ENCODE measurements at regions of chr11 and their contacts with region 1.

Region 1: GRCh38 chr11:120929664-120930154 is 94.2 kb upstream of the TBCEL start:
- DNase-seq: peak; percentile 64
- H3K4me3 Mint-ChIP-seq: no peak overlapping the region
- H3K27ac Mint-ChIP-seq: no peak overlapping the region
- H3K4me1 Mint-ChIP-seq: no peaks in the 10 kb centered on the region
- H3K27me3 Mint-ChIP-seq: peaks cover 2% of the 10 kb centered on the region

Region 2: DNA sequence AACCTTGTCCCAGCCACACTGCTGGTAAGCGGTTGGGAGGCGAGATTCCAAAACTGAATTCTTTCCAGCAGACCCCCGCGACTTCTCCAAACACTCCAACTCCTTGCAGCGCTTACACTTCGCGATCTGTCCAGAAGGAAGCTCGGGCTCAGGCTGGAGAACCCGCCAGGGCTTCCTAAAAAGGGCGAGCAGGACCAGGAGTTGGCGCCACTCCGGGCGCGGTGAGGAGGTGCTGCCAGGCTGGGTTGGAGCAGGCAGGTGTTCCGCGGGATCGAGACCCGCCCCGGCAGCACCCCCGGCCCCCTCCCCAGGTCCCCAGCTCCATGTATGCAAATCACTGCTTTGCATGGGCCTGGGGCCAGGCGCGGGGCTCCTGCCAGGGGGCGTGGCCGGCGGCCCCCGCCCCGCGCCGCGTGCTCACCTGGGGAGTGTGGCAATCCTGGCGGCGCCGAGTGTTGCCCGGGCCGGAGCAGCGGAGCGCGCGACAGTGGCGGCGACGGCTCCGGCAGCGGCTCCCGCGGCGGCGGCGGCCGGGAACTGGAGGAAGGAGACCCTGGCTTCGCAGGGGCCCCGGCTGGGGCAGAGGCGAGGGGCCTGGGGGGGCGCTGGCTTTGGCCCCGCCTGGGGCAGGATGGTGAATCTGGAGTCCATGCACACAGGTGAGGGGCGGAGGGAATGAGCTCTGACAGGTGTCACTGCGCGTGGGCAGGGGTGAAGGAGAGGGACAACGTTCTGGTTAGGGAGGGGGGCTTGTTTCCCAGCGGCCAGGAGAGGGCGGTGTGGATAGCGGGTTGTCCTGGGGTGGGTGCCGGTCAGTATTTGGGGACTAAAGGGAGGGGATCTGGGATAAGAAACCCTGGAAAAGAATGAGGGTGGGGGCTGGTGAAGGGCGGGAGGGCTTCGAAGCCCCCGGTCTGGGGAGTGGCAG is 689.7 kb before region 1 on chr11 and contains the start of gene POU2F3:
- CTCF ChIA-PET with region 1: no interaction called
- intact Hi-C with region 1: no loop called
- DNase-seq: peak; percentile 30
- H3K4me3 Mint-ChIP-seq: no peak within 1 kb of the TSS
- H3K27ac Mint-ChIP-seq: no peak within 1 kb of the TSS
- H3K4me1 Mint-ChIP-seq: peaks cover 10% of the 10 kb centered on the region
- H3K27me3 Mint-ChIP-seq: peaks cover 64% of the 10 kb centered on the region
- total RNA-seq, gene POU2F3: not detected

Region 3: GRCh38 chr11:120835601-120836228 is 94.0 kb before region 1 on chr11:
- CTCF ChIA-PET with region 1: interaction called, 3 read pairs
- intact Hi-C with region 1: loop called (anchors 1 kb)
- DNase-seq: peak; percentile 71
- H3K4me3 Mint-ChIP-seq: no peak overlapping the region
- H3K27ac Mint-ChIP-seq: no peak overlapping the region
- H3K4me1 Mint-ChIP-seq: peaks cover 16% of the 10 kb centered on the region
- H3K27me3 Mint-ChIP-seq: peaks cover 16% of the 10 kb centered on the region

Region 4: GRCh38 chr11:120854988-120855387 is 74.7 kb before region 1 on chr11:
- CTCF ChIA-PET with region 1: no interaction called
- intact Hi-C with region 1: no loop called
- DNase-seq: no peak
- H3K4me3 Mint-ChIP-seq: no peak overlapping the region
- H3K27ac Mint-ChIP-seq: no peak overlapping the region
- H3K4me1 Mint-ChIP-seq: no peaks in the 10 kb centered on the region
- H3K27me3 Mint-ChIP-seq: peaks cover 3% of the 10 kb centered on the region

Region 5: DNA sequence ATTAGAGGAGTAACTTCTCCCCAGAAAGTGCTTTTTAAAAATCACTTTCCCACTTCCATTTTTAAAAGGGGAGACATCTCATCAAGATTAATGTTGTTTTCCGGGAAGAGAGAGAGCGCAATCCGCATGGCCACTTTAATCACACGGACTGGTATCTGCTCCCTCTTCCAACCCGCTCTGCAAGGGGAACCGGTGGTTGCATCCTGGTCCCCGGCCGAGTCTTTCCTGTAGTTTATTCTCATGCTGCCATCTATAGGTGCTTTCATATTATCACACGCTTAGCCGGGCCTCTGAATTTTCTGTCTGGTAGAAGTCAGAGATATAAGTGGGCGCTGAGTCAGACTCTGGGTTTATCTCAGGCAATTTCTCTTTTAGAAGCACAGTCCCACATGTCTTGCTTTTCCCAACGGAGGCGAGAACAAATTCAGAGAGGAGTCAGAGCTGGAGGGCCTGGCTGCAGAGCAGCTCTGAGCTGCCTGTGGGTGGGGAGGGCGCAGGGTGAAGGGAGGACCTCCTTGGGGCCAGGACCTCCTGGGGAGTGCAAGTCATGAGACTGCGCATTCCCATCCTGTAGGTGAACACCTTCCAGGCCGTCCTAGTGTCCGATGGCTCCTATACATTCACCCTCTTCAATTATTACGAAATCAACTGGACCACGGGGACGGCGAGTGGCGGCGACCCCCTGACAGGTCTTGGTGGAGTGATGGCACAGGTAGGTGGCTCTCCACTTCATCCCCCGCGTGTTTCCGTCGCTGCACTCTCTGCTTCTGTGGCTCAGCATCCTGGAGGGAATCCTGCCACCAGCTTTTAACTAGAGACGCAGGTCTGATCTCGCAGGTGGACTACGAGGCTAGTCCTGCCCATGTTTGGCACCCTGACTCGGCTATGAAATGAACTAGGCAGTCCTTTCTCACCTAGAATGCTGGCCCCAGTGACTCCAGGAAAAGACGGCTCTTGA is 183.1 kb after region 1 on chr11:
- CTCF ChIA-PET with region 1: no interaction called
- intact Hi-C with region 1: loop called (anchors 1 kb)
- DNase-seq: peak; percentile 64
- H3K4me3 Mint-ChIP-seq: no peak overlapping the region
- H3K27ac Mint-ChIP-seq: no peak overlapping the region
- H3K4me1 Mint-ChIP-seq: no peaks in the 10 kb centered on the region
- H3K27me3 Mint-ChIP-seq: peaks cover 12% of the 10 kb centered on the region

Measured in activated naive CD4-positive, alpha-beta T cell treated with anti-CD3 and anti-CD28 coated beads for 36 hours (primary cell).